ENCODE measurements at regions of chr3 and their contacts with region 1.

Region 1: GRCh38 chr3:197428117-197428801 is 127.5 kb downstream of the BDH1 start:
- DNase-seq: peak; percentile 59
- H3K4me3 Mint-ChIP-seq: peak overlapping the region; percentile 68
- H3K27ac Mint-ChIP-seq: peak overlapping the region; percentile 78
- H3K4me1 Mint-ChIP-seq: peaks cover 52% of the 10 kb centered on the region
- H3K27me3 Mint-ChIP-seq: peaks cover 18% of the 10 kb centered on the region

Region 2: DNA sequence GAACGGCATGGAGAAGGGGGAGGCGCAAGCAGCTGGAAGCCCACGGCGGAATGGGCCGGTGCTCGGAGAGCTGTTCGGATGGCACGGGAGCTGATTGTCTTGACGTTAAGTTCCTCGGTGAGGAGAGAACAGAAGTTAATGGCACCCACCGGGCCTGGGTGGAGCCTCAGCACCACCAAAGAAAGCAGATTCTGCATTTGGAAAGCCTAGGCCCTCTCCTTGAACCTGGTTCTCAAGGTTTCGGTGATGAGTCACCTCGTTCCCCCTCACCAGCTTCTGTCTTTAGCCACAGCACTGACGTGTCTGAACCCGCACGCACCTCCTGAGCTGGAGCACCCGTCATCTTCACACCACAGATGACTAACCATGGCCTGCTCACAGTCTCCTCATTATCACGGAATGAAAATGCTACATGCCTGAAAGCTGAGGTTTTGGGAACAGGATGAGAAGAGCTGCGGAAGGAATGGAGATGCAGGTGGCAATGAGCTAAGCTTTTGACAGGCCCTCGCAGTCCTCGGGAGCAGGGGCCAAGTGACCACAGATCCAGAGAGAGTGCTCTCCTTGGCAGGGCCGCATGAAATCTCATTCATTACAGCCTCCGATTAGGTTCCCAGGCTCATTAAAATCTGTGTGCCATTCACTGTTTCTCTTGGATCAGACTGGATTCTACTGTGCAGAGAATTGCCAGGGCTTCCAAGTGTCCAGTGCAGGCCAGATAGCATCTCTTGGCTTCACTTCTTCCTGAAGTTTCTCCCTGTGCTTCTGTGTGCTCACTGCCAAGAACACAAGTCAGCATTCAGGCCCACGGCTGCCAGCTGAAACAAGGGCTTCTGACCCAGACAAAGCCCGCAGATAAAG is 33.6 kb before region 1 on chr3:
- intact Hi-C with region 1: loop called (anchors 5 kb)
- DNase-seq: peak; percentile 37
- H3K4me3 Mint-ChIP-seq: peak overlapping the region; percentile 62
- H3K27ac Mint-ChIP-seq: peak overlapping the region; percentile 24
- H3K4me1 Mint-ChIP-seq: peaks cover 26% of the 10 kb centered on the region
- H3K27me3 Mint-ChIP-seq: no peaks in the 10 kb centered on the region

Region 3: GRCh38 chr3:197520311-197521276 is 92.3 kb after region 1 on chr3:
- intact Hi-C with region 1: no loop called
- DNase-seq: no peak
- H3K4me3 Mint-ChIP-seq: no peak overlapping the region
- H3K27ac Mint-ChIP-seq: peak overlapping the region; percentile 53
- H3K4me1 Mint-ChIP-seq: peaks cover 13% of the 10 kb centered on the region
- H3K27me3 Mint-ChIP-seq: no peaks in the 10 kb centered on the region

Measured in activated T-helper 1 cell treated with anti-CD3 and anti-CD28 coated beads, Interleukin-12 subunit alpha, Interleukin-12 subunit beta, Interleukin-2, Interleukin-4 antibody, amounts not matched to agents 30 ng/mL and 10 ng/mL and 1 ng/mL, durations not matched to agents 14 hours and 24 hours and 36 hours (primary cell).